A549 (cell line): ENCODE measurements at regions of chr15 and their contacts with region 1.

Region 1: GRCh38 chr15:70488002-70488605 is 275.3 kb downstream of the UACA start:
- DNase-seq: peak; percentile 80 to 88
- ATAC-seq: peak; percentile 45 to 67; a peak in 4 of 6 replicates
- H3K4me3 ChIP-seq: no peak overlapping the region
- H3K27ac ChIP-seq: peak overlapping the region; percentile 30 to 93; a peak in 4 of 6 replicates
- H3K4me1 ChIP-seq: peaks cover 32% of the 10 kb centered on the region
- CTCF ChIP-seq: peak; percentile 95
- EP300 ChIP-seq: no peak
- POLR2A ChIP-seq: no peak
- RAD21 ChIP-seq: peak; percentile 98 to 99

Region 2: GRCh38 chr15:69462493-69463181 is 1025.5 kb before region 1 on chr15:
- CTCF ChIA-PET with region 1: interaction called, 10 read pairs
- POLR2A ChIA-PET with region 1: no interaction called
- DNase-seq: peak; percentile 99 to 100
- ATAC-seq: peak; percentile 78 to 88
- H3K4me3 ChIP-seq: peak overlapping the region; percentile 59
- H3K27ac ChIP-seq: peak overlapping the region; percentile 90 to 92
- H3K4me1 ChIP-seq: peaks cover 31% of the 10 kb centered on the region
- CTCF ChIP-seq: peak; percentile 82
- EP300 ChIP-seq: no peak
- POLR2A ChIP-seq: peak; percentile 54
- RAD21 ChIP-seq: no peak

Region 3: DNA sequence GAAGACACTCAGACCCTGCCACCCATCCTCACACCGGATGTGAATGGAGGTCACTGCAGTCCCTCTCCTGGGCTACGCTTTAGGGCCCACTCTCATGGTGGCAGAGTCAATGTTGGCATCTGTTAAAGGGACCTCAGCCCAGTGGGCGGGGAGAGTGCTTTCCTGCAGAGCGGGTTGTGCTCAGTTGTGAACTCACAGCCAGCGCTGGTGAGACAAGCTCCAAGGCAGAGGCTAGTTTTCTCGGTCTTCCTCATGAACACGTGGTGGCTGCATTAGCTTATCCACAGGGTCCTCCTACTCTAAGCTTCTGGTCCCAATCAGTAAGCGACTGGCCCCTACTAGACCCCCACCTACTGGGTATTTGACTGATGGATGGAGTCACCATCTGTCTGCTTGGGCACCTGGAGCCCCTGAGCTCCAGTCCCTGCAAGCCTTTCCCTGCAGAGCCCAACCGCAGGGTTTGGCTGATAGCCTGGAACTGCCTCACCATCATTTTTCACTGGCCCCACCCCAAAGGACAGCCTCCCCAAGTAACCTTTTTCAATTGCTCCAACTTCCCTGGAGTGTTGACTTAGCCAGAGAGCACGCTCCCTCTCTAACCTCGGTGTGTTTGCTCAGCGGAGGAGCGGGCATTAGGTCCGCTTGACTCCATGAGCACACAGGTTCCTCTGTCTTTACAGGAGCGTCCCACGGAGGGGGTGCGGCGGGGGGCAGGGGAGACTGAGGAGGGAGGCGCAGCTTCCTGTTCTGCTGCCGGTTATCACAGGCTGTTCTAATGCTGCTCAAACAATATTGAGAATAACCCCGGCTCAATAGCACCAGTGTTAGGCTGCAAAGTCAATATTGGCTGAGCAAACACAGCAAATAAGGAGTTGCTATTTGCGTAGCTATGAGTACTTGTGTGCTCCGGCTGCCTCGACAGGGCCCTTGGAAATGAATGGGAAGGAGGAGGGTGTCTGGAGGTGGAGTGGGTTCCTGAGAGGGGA is 893.8 kb before region 1 on chr15:
- CTCF ChIA-PET with region 1: interaction called, 14 read pairs
- POLR2A ChIA-PET with region 1: no interaction called
- DNase-seq: peak; percentile 89 to 98
- ATAC-seq: peak; percentile 86 to 90
- H3K4me3 ChIP-seq: peak overlapping the region; percentile 17; the same call in 1 of the 3 replicates
- H3K27ac ChIP-seq: peak overlapping the region; percentile 63 to 73
- H3K4me1 ChIP-seq: peaks cover 50% of the 10 kb centered on the region
- CTCF ChIP-seq: no peak
- EP300 ChIP-seq: peak; percentile 53 to 69; a peak in 2 of 5 replicates
- POLR2A ChIP-seq: no peak
- RAD21 ChIP-seq: peak in 1 of 2 experiments; percentile 49; a peak in 3 of 5 replicates

Region 4: DNA sequence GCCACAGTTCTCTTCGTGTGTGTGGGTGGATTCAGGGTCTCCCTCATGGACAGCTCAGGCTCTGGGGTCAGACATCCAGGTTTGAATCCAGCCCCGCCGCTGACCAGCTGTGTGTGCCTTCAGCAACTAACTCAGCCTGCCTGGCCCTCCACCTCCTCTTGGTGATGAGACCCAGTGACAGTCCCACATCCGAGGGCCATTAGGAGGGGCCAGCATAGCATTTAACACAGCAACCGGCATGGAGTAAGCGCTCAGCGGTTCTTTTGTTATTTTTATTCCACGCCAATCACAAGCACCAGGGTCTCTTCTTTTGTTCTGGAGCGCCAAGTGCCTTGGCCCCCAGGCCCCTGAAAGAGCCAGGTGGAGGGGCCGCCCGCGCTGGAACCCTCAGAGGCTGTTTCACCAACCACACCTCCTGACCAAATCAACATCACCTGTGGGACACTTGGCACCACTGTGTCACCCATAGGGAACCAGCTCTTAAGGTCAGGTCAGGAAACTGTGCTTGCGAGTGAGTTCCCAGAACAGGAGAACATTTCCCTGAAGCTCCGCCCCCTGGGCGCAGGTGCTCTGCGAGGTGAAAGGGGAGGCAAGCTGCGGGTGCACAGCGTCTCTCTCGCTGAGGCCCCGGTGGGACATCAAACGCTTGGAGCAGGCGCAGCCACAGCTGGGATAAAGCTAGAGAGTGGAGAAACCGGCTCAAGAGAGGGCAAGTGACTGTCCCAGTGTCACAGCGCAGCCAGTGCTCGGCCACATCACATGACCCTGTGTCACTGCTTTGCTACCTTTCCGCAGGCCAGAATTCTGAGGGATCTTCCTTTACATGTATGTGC is 36.1 kb before region 1 on chr15:
- CTCF ChIA-PET with region 1: interaction called, 11 read pairs
- POLR2A ChIA-PET with region 1: no interaction called
- DNase-seq: no peak
- ATAC-seq: 0 out of 6 replicates have a peak, but pooled peaks of 1 of the 2 experiments have one; percentile 22
- H3K4me3 ChIP-seq: no peak overlapping the region
- H3K27ac ChIP-seq: no peak overlapping the region
- H3K4me1 ChIP-seq: no peaks in the 10 kb centered on the region
- CTCF ChIP-seq: no peak
- EP300 ChIP-seq: no peak
- POLR2A ChIP-seq: no peak
- RAD21 ChIP-seq: no peak

Region 5: DNA sequence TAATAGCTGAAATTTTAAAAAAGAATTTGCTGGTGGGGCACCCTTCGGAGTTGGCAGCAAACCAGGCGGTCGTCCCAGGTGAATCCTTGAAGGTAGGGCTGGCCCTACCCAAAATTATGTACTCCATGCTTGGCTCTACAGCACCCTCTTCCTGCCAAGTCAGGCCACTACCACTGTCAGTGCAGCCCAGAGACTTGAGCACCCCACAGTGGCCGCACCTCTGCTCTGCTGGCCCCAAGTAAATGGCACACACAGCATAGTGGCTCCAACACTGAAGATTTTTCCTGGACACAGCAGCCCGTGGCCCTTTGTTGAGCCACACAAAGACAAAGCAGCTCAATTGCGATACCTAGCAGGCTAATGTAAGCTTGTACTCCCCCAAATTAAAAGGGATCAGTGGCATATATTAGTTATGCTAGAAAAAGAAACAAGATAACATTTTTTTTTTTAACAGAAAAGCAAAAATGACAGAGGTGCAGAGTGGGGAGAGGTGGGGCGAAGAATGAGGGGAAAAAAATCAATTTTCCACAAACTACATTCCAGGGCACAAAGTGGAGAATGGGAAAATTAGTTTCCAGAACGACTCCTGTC is 24.8 kb after region 1 on chr15:
- CTCF ChIA-PET with region 1: interaction called, 228 read pairs
- POLR2A ChIA-PET with region 1: interaction called, 3 read pairs
- DNase-seq: peak; percentile 67 to 90
- ATAC-seq: peak in 1 of 2 experiments; percentile 33; a peak in 3 of 6 replicates
- H3K4me3 ChIP-seq: no peak overlapping the region
- H3K27ac ChIP-seq: peak overlapping the region in 1 of 2 experiments; percentile 4; a peak in 1 of 6 replicates
- H3K4me1 ChIP-seq: peaks cover 20% of the 10 kb centered on the region
- CTCF ChIP-seq: peak; percentile 70
- EP300 ChIP-seq: no peak
- POLR2A ChIP-seq: no peak
- RAD21 ChIP-seq: peak; percentile 83 to 96

Region 6: GRCh38 chr15:70584838-70585706 is 97.0 kb after region 1 on chr15:
- CTCF ChIA-PET with region 1: interaction called, 29 read pairs
- POLR2A ChIA-PET with region 1: no interaction called
- DNase-seq: peak; percentile 52 to 77
- ATAC-seq: peak; percentile 77 to 94
- H3K4me3 ChIP-seq: peak overlapping the region; percentile 41
- H3K27ac ChIP-seq: peak overlapping the region; percentile 71 to 83
- H3K4me1 ChIP-seq: peaks cover 23% of the 10 kb centered on the region
- CTCF ChIP-seq: peak; percentile 89
- EP300 ChIP-seq: no peak
- POLR2A ChIP-seq: no peak
- RAD21 ChIP-seq: peak; percentile 77 to 96

Region 7: GRCh38 chr15:70815644-70816043 is 327.5 kb after region 1 on chr15:
- CTCF ChIA-PET with region 1: no interaction called
- POLR2A ChIA-PET with region 1: no interaction called
- DNase-seq: peak in 1 of 2 experiments; percentile 53
- ATAC-seq: peak; percentile 52 to 53; a peak in 5 of 6 replicates
- H3K4me3 ChIP-seq: no peak overlapping the region
- H3K27ac ChIP-seq: 0 out of 6 replicates have a peak overlapping the region, but pooled peaks of 1 of the 2 experiments have one; percentile 14
- H3K4me1 ChIP-seq: peaks cover 23% of the 10 kb centered on the region
- CTCF ChIP-seq: no peak
- EP300 ChIP-seq: no peak
- POLR2A ChIP-seq: no peak
- RAD21 ChIP-seq: no peak